ENCODE measurements at regions of chr11 and their contacts with region 1.

Region 1: GRCh38 chr11:73982969-73983740 is 512 bp upstream of the UCP2 start:
- DNase-seq: peak; percentile 91
- ATAC-seq: peak; percentile 81
- H3K4me3 Mint-ChIP-seq: peak overlapping the region; percentile 99
- H3K27ac Mint-ChIP-seq: peak overlapping the region; percentile 99
- H3K4me1 Mint-ChIP-seq: peaks cover 29% of the 10 kb centered on the region
- H3K27me3 Mint-ChIP-seq: no peaks in the 10 kb centered on the region

Region 2: GRCh38 chr11:73965076-73965860 is 17.9 kb before region 1 on chr11:
- POLR2A ChIA-PET with region 1: interaction called, 196 read pairs
- DNase-seq: no peak
- ATAC-seq: no peak
- H3K4me3 Mint-ChIP-seq: peak overlapping the region; percentile 23
- H3K27ac Mint-ChIP-seq: no peak overlapping the region
- H3K4me1 Mint-ChIP-seq: peaks cover 29% of the 10 kb centered on the region
- H3K27me3 Mint-ChIP-seq: no peaks in the 10 kb centered on the region

Region 3: GRCh38 chr11:73995247-73995646 is 12.1 kb after region 1 on chr11:
- POLR2A ChIA-PET with region 1: interaction called, 237 read pairs
- DNase-seq: peak; percentile 1
- ATAC-seq: peak; percentile 82
- H3K4me3 Mint-ChIP-seq: peak overlapping the region; percentile 86
- H3K27ac Mint-ChIP-seq: peak overlapping the region; percentile 95
- H3K4me1 Mint-ChIP-seq: peaks cover 37% of the 10 kb centered on the region
- H3K27me3 Mint-ChIP-seq: no peaks in the 10 kb centered on the region

Region 4: GRCh38 chr11:74004759-74005615 is 21.8 kb after region 1 on chr11:
- POLR2A ChIA-PET with region 1: interaction called, 56 read pairs
- DNase-seq: peak; percentile 79
- ATAC-seq: peak; percentile 99
- H3K4me3 Mint-ChIP-seq: peak overlapping the region; percentile 77
- H3K27ac Mint-ChIP-seq: peak overlapping the region; percentile 96
- H3K4me1 Mint-ChIP-seq: peaks cover 36% of the 10 kb centered on the region
- H3K27me3 Mint-ChIP-seq: no peaks in the 10 kb centered on the region

Region 5: DNA sequence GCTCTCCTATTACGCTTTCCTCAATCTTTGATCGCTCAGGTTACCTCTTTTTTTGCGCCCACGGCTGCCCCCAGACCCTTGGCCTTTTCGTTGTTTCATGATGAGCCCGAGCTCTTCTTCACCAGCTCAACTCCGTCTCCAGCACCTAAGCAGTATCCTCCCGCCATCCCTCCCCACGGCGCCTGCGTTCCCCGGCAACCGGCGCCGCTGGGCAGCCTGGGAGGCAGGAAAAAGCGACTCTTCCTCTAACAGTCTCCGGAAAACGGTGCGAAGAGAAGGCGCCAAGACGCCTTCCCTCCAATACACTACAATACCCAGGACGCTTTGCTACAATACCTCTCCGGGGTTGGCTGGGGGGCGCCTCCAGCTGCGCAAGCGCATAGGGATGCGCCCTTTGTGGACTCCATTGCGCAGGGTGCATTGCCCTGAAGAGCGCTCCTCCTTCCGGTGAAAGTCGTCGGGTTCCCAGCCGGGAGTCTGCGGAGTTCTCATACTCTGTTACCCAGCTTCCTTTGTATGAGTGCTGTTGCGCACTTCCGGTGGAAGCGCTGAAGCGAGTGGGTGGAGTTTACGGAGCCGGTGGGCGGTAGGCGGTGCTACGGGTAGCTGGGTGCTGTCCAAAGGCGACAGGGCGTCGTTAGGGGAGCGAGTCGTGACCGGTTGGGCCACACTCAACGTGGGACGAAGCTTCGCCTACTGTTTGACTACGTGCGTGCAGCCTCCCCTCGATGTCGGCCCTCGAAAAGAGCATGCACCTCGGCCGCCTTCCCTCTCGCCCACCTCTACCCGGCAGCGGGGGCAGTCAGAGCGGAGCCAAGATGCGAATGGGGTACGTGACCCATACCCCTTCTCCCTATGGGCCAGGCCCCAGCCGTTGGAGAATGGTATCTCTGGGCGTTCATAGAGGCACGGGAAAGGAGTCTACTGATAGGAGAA is 187.8 kb after region 1 on chr11 and contains the starts of genes C2CD3 and PPME1:
- POLR2A ChIA-PET with region 1: interaction called, 38 read pairs
- DNase-seq: peak; percentile 92
- ATAC-seq: peak; percentile 97
- H3K4me3 Mint-ChIP-seq: no peak within 1 kb of the TSS
- H3K27ac Mint-ChIP-seq: no peak within 1 kb of the TSS
- H3K4me1 Mint-ChIP-seq: peaks cover 17% of the 10 kb centered on the region
- H3K27me3 Mint-ChIP-seq: no peaks in the 10 kb centered on the region
- total RNA-seq, gene C2CD3: 36.2 to 37.6 TPM
- total RNA-seq, gene PPME1: 29.2 to 29.7 TPM